ENCODE measurements at regions of chr15 and their contacts with region 1.

Region 1: DNA sequence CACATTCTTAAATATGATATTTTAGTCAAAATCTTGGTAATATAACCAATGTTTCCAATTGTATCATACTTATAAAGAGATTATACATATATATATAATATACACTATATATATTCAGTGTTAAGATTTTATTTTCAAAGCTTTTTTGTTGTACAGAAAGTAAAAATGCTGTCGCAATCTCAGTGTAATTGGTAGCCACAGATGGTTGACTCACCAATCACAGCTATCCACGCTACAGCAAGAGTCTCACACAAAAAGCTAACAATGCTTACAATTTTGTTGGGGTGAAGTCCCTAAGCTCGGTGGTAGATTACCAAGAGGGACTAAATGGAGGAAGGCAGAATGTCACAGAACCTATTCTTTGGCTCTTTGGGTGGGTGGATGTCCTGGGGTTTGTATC is 16.9 kb upstream of the CFAP161 start:
- DNase-seq: no peak
- H3K4me3 ChIP-seq: no peak overlapping the region
- H3K27ac ChIP-seq: no peak overlapping the region
- H3K4me1 ChIP-seq: peaks cover 0 to 19% (median 0%) of the 10 kb centered on the region in 3 donors
- H3K27me3 ChIP-seq: peaks cover 0 to 18% (median 2%) of the 10 kb centered on the region in 4 donors
- CTCF ChIP-seq: no peak
- POLR2A ChIP-seq: no peak

Region 2: GRCh38 chr15:81071120-81071519 is 46.0 kb before region 1 on chr15:
- intact Hi-C with region 1: no loop called
- DNase-seq: no peak
- H3K4me3 ChIP-seq: no peak overlapping the region
- H3K27ac ChIP-seq: no peak overlapping the region
- H3K4me1 ChIP-seq: peaks cover 0 to 12% (median 0%) of the 10 kb centered on the region in 3 donors
- H3K27me3 ChIP-seq: no peaks in the 10 kb centered on the region
- CTCF ChIP-seq: no peak
- POLR2A ChIP-seq: no peak

Region 3: DNA sequence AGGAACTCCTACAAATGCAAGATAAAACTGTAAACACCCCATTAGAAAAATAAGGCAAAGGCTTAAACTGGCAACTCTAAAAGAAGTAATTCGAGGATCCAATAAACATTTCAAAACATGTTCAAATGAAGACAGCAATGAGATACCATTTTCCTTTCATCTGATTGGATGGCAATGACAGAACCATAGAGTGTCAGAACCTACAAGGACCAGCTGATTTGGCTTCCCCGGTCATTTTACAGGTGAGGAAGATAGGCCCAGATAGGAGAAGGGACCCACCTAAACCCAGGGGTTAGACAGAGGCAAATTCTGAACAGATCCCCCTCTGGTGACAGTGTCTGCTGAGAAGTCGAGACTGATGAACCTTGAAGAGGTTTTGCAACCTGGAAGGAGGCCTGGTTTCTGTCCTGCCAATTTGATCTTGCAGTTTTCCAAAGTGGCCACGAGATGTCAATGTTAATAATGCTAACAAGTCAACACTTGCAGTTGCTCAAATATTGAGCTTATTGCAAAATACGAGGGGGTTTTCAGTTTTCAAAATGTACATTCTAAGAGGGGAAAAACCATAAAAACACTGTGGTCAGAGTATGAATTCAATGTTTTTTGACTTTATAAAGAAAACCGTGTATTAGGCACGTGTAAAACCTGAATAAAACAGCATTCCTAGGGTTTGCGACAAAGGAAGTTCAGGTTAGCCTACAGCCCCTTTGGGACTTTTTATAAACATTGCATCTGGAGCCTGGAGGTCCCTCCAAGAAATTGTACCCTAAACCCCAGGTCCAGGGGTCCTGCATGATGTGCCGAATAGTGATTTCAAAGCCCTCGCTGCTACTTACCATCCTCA is 38.5 kb after region 1 on chr15:
- intact Hi-C with region 1: loop called (anchors 5 kb)
- DNase-seq: no peak
- H3K4me3 ChIP-seq: no peak overlapping the region
- H3K27ac ChIP-seq: peak overlapping the region in 3 of 4 donors; percentile 20 to 82 (median 69)
- H3K4me1 ChIP-seq: peaks cover 6 to 48% (median 15%) of the 10 kb centered on the region in 3 donors
- H3K27me3 ChIP-seq: no peaks in the 10 kb centered on the region
- CTCF ChIP-seq: peak in 5 of 6 experiments; percentile 51 to 68 (median 57)
- POLR2A ChIP-seq: no peak

Region 4: GRCh38 chr15:81176291-81176893 is 59.3 kb after region 1 on chr15:
- intact Hi-C with region 1: no loop called
- DNase-seq: no peak
- H3K4me3 ChIP-seq: no peak overlapping the region
- H3K27ac ChIP-seq: peak overlapping the region in 3 of 4 donors; percentile 54 to 83 (median 62)
- H3K4me1 ChIP-seq: peaks cover 0 to 9% (median 0%) of the 10 kb centered on the region in 3 donors
- H3K27me3 ChIP-seq: peaks cover 0 to 45% (median 0%) of the 10 kb centered on the region in 4 donors
- CTCF ChIP-seq: no peak
- POLR2A ChIP-seq: no peak

Measured in esophagus squamous epithelium (tissue), 5 donors.